CD8-positive, alpha-beta T cell (primary cell): ENCODE measurements at regions of chr6 and their contacts with region 1.

Region 1: DNA sequence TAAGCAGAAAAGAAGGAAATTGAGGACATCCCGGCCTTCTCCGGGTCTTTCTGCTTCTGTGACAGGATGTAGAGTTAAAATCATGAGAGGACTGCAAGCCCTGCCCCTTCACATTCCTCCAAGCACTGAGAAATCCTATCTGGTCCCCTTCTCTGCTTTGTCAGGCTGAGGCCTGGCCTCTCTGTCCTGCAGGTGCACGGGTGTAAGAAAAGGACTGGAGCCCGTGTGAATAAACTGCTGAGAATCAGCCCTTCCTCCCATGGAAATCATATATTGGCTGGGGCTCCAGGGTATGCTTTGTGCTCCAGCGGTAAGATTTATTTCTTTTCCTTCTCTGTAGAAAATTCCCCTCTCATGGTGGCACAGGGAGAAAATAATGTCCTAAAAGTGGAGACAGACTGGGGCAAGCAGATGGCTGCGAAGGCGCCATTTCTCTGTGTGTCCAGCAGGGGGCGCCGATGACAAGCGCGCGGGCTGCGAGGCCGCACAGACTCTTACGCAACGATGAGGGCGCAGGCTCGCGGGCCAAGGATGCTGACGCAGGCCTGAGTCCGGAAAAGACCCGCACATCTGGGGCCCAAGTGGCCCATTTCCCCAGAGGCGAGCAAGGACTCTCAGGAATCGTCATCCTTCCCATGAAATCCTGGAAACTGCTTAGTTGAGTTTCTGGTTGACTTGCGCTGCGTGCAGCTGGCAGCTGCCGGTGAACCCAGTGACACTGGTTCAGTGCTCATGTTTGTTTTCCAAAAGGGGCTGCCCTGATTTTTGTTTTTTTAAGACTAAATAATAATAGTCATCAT is 258.6 kb downstream of the ADGB start:
- DNase-seq: peak; percentile 34 to 86 (median 68)
- ATAC-seq: peak; percentile 88
- H3K4me3 ChIP-seq: peak overlapping the region; percentile 10 to 32
- H3K4me3 Mint-ChIP-seq: peak overlapping the region; percentile 24
- H3K27ac ChIP-seq: no peak overlapping the region
- H3K27ac Mint-ChIP-seq: no peak overlapping the region
- H3K4me1 ChIP-seq: no peaks in the 10 kb centered on the region
- H3K4me1 Mint-ChIP-seq: peaks cover 2% of the 10 kb centered on the region
- H3K27me3 ChIP-seq: no peaks in the 10 kb centered on the region
- H3K27me3 Mint-ChIP-seq: peaks cover 2% of the 10 kb centered on the region
- CTCF ChIP-seq: peak; percentile 94

Region 2: GRCh38 chr6:147117580-147117979 is 260.2 kb after region 1 on chr6:
- CTCF ChIA-PET with region 1: no interaction called
- POLR2A ChIA-PET with region 1: no interaction called
- intact Hi-C with region 1: no loop called
- DNase-seq: no peak
- ATAC-seq: no peak
- H3K4me3 ChIP-seq: no peak overlapping the region
- H3K4me3 Mint-ChIP-seq: no peak overlapping the region
- H3K27ac ChIP-seq: no peak overlapping the region
- H3K27ac Mint-ChIP-seq: no peak overlapping the region
- H3K4me1 ChIP-seq: no peaks in the 10 kb centered on the region
- H3K4me1 Mint-ChIP-seq: no peaks in the 10 kb centered on the region
- H3K27me3 ChIP-seq: no peaks in the 10 kb centered on the region
- H3K27me3 Mint-ChIP-seq: no peaks in the 10 kb centered on the region
- CTCF ChIP-seq: no peak

Region 3: GRCh38 chr6:147222160-147222838 is 364.9 kb after region 1 on chr6:
- CTCF ChIA-PET with region 1: no interaction called
- POLR2A ChIA-PET with region 1: no interaction called
- intact Hi-C with region 1: loop called (anchors 1 to 2 kb)
- DNase-seq: peak in 2 of 9 experiments; percentile 29 to 44
- ATAC-seq: peak; percentile 61
- H3K4me3 ChIP-seq: no peak overlapping the region
- H3K4me3 Mint-ChIP-seq: no peak overlapping the region
- H3K27ac ChIP-seq: no peak overlapping the region
- H3K27ac Mint-ChIP-seq: peak overlapping the region; percentile 62
- H3K4me1 ChIP-seq: peaks cover 11% of the 10 kb centered on the region
- H3K4me1 Mint-ChIP-seq: peaks cover 60% of the 10 kb centered on the region
- H3K27me3 ChIP-seq: no peaks in the 10 kb centered on the region
- H3K27me3 Mint-ChIP-seq: no peaks in the 10 kb centered on the region
- CTCF ChIP-seq: peak; percentile 58

Region 4: GRCh38 chr6:147285087-147285855 is 427.9 kb after region 1 on chr6:
- CTCF ChIA-PET with region 1: interaction called, 14 read pairs
- POLR2A ChIA-PET with region 1: no interaction called
- intact Hi-C with region 1: loop called (anchors 1 kb)
- DNase-seq: peak in 2 of 9 experiments; percentile 38 to 57
- ATAC-seq: no peak
- H3K4me3 ChIP-seq: no peak overlapping the region
- H3K4me3 Mint-ChIP-seq: no peak overlapping the region
- H3K27ac ChIP-seq: no peak overlapping the region
- H3K27ac Mint-ChIP-seq: peak overlapping the region; percentile 60
- H3K4me1 ChIP-seq: no peaks in the 10 kb centered on the region
- H3K4me1 Mint-ChIP-seq: peaks cover 23% of the 10 kb centered on the region
- H3K27me3 ChIP-seq: no peaks in the 10 kb centered on the region
- H3K27me3 Mint-ChIP-seq: no peaks in the 10 kb centered on the region
- CTCF ChIP-seq: peak; percentile 59

Region 5: DNA sequence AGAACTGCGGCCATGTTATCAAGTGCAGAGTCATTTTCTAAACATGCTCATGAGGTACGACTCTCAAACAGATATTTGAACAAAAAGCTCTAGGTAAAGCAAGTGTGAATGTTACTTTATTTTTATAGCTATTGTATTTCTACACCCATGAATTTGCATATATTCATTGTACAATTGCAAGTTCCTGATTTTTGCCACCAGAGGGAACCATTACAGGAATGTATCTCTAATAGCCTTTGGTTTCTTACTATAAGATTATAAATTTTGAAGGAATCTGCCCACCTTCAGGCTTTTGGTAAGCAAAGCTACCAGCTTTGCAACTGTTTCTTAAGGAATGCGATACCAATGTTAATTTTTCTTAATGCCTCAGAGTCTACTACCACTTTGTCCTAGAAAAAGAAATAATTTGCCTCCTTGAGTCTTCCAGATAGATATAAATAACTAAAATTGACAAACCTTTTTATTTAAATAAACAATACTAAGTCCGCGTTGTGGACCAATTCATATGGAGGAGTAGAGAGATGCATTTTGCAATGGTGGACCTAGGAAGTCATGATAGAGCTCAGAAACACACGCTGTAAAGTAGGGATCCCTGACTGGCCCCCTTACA is 525.7 kb after region 1 on chr6:
- CTCF ChIA-PET with region 1: no interaction called
- POLR2A ChIA-PET with region 1: no interaction called
- intact Hi-C with region 1: no loop called
- DNase-seq: peak in 1 of 9 experiments; percentile 8
- ATAC-seq: no peak
- H3K4me3 ChIP-seq: no peak overlapping the region
- H3K4me3 Mint-ChIP-seq: no peak overlapping the region
- H3K27ac ChIP-seq: no peak overlapping the region
- H3K27ac Mint-ChIP-seq: no peak overlapping the region
- H3K4me1 ChIP-seq: no peaks in the 10 kb centered on the region
- H3K4me1 Mint-ChIP-seq: no peaks in the 10 kb centered on the region
- H3K27me3 ChIP-seq: no peaks in the 10 kb centered on the region
- H3K27me3 Mint-ChIP-seq: no peaks in the 10 kb centered on the region
- CTCF ChIP-seq: peak; percentile 47

Region 6: GRCh38 chr6:148166339-148166968 is 1309.1 kb after region 1 on chr6:
- CTCF ChIA-PET with region 1: no interaction called
- POLR2A ChIA-PET with region 1: no interaction called
- intact Hi-C with region 1: loop called (anchors 2 kb)
- DNase-seq: peak in 2 of 9 experiments; percentile 26 to 46
- ATAC-seq: no peak
- H3K4me3 ChIP-seq: no peak overlapping the region
- H3K4me3 Mint-ChIP-seq: no peak overlapping the region
- H3K27ac ChIP-seq: no peak overlapping the region
- H3K27ac Mint-ChIP-seq: no peak overlapping the region
- H3K4me1 ChIP-seq: no peaks in the 10 kb centered on the region
- H3K4me1 Mint-ChIP-seq: no peaks in the 10 kb centered on the region
- H3K27me3 ChIP-seq: no peaks in the 10 kb centered on the region
- H3K27me3 Mint-ChIP-seq: peaks cover 3% of the 10 kb centered on the region
- CTCF ChIP-seq: peak; percentile 51